ENCODE measurements at regions of chr1 and their contacts with region 1.

Region 1: DNA sequence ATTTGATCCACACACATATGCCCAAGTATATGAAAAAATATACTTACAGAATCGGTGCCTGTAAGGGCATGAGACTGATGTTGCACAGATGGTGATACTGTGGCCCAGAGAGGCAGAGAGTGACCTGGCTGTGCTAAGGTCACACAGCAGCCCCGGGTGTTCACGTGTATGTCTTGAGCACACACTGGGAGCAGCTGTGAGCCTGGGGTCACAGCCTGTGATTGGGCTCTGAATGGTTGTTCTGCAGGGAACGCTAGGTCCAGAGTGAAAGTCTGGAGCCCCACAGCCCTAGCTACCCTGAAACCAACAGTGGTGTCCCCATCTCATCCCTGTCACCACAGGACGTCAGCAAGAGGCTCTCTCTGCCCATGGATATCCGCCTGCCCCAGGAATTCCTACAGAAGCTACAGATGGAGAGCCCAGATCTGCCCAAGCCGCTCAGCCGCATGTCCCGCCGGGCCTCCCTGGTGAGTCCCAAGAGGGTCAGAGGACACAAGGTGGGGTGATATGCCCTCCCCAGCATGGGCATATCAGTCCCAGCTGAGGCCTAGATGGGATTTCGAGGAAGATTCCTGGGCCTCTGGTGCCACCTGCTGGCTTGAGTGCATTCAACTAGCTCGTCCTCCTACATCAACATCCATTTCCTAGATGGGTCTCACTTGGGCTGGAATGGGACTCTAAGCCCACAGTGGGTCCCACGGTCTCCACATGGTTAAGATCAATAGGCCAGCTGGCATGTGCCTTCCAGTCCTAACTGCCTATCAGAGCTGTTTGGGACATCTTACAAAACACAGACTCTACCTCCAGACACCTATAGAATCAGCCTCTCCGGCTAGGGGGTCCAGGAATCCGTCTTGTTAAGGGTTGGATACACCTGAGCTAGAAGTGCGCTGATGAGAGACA is 19.7 kb downstream of the CDK18 start:
- DNase-seq: peak; percentile 84
- ATAC-seq: peak; percentile 59
- H3K4me3 ChIP-seq: no peak overlapping the region
- H3K4me3 Mint-ChIP-seq: no peak overlapping the region
- H3K27ac ChIP-seq: no peak overlapping the region
- H3K27ac Mint-ChIP-seq: no peak overlapping the region
- H3K4me1 ChIP-seq: peaks cover 1 to 6% of the 10 kb centered on the region in 2 donors
- H3K4me1 Mint-ChIP-seq: peaks cover 2% of the 10 kb centered on the region
- H3K27me3 ChIP-seq: peaks cover 0 to 2% (median 0%) of the 10 kb centered on the region in 4 experiments
- H3K27me3 Mint-ChIP-seq: peaks cover 3% of the 10 kb centered on the region
- CTCF ChIP-seq: peak; percentile 78

Region 2: GRCh38 chr1:205321164-205321958 is 202.8 kb before region 1 on chr1 and contains the start of gene NUAK2:
- CTCF ChIA-PET with region 1: interaction called, 43 read pairs
- POLR2A ChIA-PET with region 1: no interaction called
- intact Hi-C with region 1: no loop called
- DNase-seq: peak; percentile 89
- ATAC-seq: peak; percentile 90
- H3K4me3 ChIP-seq: peak within 1 kb of the TSS; percentile 65 to 100 (median 98)
- H3K4me3 Mint-ChIP-seq: peak within 1 kb of the TSS; percentile 97
- H3K27ac ChIP-seq: peak within 1 kb of the TSS; percentile 65 to 98
- H3K27ac Mint-ChIP-seq: peak within 1 kb of the TSS; percentile 95
- H3K4me1 ChIP-seq: peaks cover 52 to 54% of the 10 kb centered on the region in 2 donors
- H3K4me1 Mint-ChIP-seq: peaks cover 62% of the 10 kb centered on the region
- H3K27me3 ChIP-seq: no peaks in the 10 kb centered on the region
- H3K27me3 Mint-ChIP-seq: peaks cover 2% of the 10 kb centered on the region
- CTCF ChIP-seq: peak; percentile 35
- total RNA-seq, gene NUAK2: 102 and 105 TPM in 2 replicates

Region 3: GRCh38 chr1:205344066-205344928 is 179.8 kb before region 1 on chr1:
- CTCF ChIA-PET with region 1: interaction called, 29 read pairs
- POLR2A ChIA-PET with region 1: no interaction called
- intact Hi-C with region 1: no loop called
- DNase-seq: peak; percentile 69
- ATAC-seq: peak; percentile 61
- H3K4me3 ChIP-seq: peak overlapping the region in 4 of 5 experiments; percentile 37 to 51 (median 50)
- H3K4me3 Mint-ChIP-seq: peak overlapping the region; percentile 84
- H3K27ac ChIP-seq: no peak overlapping the region
- H3K27ac Mint-ChIP-seq: peak overlapping the region; percentile 32
- H3K4me1 ChIP-seq: peaks cover 34 to 42% of the 10 kb centered on the region in 2 donors
- H3K4me1 Mint-ChIP-seq: peaks cover 48% of the 10 kb centered on the region
- H3K27me3 ChIP-seq: peaks cover 0 to 20% (median 10%) of the 10 kb centered on the region in 4 experiments
- H3K27me3 Mint-ChIP-seq: peaks cover 8% of the 10 kb centered on the region
- CTCF ChIP-seq: no peak

Region 4: DNA sequence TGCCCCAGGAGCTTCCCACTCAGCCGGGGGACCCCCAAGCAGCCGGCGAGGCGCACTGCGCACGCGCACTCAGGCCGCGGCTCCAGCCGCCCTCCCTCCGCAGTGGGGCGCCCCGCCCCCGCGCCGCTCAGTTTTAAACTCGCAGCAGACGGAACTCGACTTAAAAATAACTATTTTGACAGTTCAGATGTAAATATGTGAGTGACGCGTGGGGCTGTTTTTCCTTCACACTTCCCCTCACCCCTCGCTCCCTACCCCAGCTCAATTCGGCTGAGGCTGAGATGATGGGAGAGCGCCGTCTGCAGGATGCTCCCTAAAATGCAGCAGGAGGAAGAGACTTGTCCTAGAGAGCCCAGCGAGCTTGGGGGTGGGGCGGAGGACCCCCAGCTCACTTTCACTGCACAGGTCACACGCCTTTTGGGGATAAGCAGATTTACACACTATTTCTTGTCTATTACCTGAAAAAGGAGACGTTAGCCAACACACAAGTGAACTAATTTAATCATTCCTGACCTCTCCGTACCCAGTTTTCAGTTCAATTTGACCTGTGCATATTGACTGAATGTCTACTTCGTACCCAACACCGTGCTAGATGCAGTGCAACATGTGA is 93.3 kb before region 1 on chr1:
- CTCF ChIA-PET with region 1: interaction called, 13 read pairs
- POLR2A ChIA-PET with region 1: no interaction called
- intact Hi-C with region 1: no loop called
- DNase-seq: peak; percentile 88
- ATAC-seq: peak; percentile 91
- H3K4me3 ChIP-seq: peak overlapping the region; percentile 23 to 54 (median 46)
- H3K4me3 Mint-ChIP-seq: peak overlapping the region; percentile 80
- H3K27ac ChIP-seq: peak overlapping the region; percentile 4 to 43
- H3K27ac Mint-ChIP-seq: peak overlapping the region; percentile 70
- H3K4me1 ChIP-seq: peaks cover 25 to 33% of the 10 kb centered on the region in 2 donors
- H3K4me1 Mint-ChIP-seq: peaks cover 39% of the 10 kb centered on the region
- H3K27me3 ChIP-seq: no peaks in the 10 kb centered on the region
- H3K27me3 Mint-ChIP-seq: no peaks in the 10 kb centered on the region
- CTCF ChIP-seq: peak; percentile 70

Region 5: DNA sequence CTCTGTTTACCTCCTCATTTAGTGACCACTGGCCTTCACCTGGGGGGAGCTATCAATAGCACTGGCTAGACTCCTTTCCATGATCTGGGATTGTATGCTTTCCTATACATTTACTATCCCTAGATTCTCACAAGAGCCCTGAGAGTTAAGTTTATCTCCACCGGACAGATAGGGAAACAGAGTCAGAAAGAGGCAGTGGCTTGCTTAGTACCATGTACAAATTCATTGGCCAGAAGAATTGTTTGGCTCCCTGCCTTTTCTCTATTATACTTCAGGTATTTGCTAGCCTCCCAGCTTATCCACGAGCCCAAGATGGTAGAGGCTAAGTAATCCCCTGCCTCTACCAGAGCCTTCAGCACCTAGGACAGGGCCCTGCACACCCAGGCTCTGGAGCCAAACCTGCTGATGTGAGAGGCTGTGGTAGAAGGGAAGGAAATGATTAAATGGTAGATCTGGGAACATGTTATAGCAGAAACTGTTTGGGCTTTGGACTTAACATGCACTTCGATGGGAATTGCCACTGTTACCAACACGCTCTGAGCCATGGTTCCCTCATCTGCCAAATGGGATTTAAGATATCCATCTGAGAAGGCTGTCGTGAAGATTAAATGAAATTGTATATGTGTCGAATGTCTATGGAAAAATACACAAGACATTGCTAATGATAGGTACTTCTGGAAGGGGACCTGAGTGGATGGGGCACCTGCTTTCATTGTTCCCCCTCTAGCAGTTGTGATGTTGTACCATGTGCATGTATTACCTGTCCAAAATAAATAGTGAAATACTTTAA is 65.2 kb before region 1 on chr1:
- CTCF ChIA-PET with region 1: no interaction called
- POLR2A ChIA-PET with region 1: no interaction called
- intact Hi-C with region 1: no loop called
- DNase-seq: no peak
- ATAC-seq: peak; percentile 53
- H3K4me3 ChIP-seq: no peak overlapping the region
- H3K4me3 Mint-ChIP-seq: no peak overlapping the region
- H3K27ac ChIP-seq: no peak overlapping the region
- H3K27ac Mint-ChIP-seq: no peak overlapping the region
- H3K4me1 ChIP-seq: peaks cover 22 to 28% of the 10 kb centered on the region in 2 donors
- H3K4me1 Mint-ChIP-seq: peaks cover 18% of the 10 kb centered on the region
- H3K27me3 ChIP-seq: peaks cover 0 to 59% (median 38%) of the 10 kb centered on the region in 4 experiments
- H3K27me3 Mint-ChIP-seq: peaks cover 54% of the 10 kb centered on the region
- CTCF ChIP-seq: no peak

Region 6: GRCh38 chr1:205504311-205504984 is 19.7 kb before region 1 on chr1 and contains the start of gene CDK18:
- CTCF ChIA-PET with region 1: interaction called, 20 read pairs
- POLR2A ChIA-PET with region 1: no interaction called
- intact Hi-C with region 1: no loop called
- DNase-seq: peak; percentile 67
- ATAC-seq: peak; percentile 71
- H3K4me3 ChIP-seq: peak within 1 kb of the TSS; percentile 36 to 81 (median 62)
- H3K4me3 Mint-ChIP-seq: peak within 1 kb of the TSS; percentile 84
- H3K27ac ChIP-seq: no peak within 1 kb of the TSS
- H3K27ac Mint-ChIP-seq: peak within 1 kb of the TSS; percentile 63
- H3K4me1 ChIP-seq: peaks cover 8 to 12% of the 10 kb centered on the region in 2 donors
- H3K4me1 Mint-ChIP-seq: peaks cover 13% of the 10 kb centered on the region
- H3K27me3 ChIP-seq: peaks cover 0 to 10% (median 2%) of the 10 kb centered on the region in 4 experiments
- H3K27me3 Mint-ChIP-seq: peaks cover 3% of the 10 kb centered on the region
- CTCF ChIP-seq: no peak
- total RNA-seq, gene CDK18: 3.7 and 4.7 TPM in 2 replicates

Region 7: DNA sequence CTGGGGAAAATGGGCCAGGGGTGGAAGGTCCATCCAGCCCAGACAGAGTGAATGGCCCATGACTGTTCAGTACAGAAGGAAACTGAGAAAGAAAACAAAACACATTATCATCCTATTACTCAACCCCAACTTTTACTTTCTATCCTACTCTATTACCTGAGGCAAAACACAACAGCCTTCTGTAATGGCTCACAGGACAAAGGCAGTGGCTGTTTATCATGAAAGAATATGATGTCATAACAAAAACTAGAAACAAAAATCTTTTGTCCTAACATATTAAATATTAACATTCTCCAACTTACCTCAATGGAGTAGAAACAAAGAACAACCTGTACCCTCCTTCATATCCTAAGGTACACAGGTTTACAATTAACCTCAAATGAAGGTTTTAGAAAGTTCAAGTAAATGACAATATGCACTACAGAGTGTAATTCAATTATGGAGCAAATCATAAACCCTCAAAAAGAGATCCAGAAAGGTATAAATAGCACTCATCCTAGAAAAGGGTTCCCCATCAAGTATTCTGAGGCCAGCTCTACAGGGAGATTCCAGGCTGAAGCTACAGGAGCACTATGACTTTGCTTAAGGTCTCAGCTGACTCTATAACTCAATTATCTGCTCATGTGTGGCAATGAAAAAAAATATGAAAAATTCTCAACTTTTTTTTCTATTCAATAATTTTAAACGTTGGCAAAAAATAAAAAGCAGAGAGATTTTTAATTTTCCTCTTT is 92.6 kb after region 1 on chr1:
- CTCF ChIA-PET with region 1: no interaction called
- POLR2A ChIA-PET with region 1: no interaction called
- intact Hi-C with region 1: no loop called
- DNase-seq: no peak
- ATAC-seq: no peak
- H3K4me3 ChIP-seq: no peak overlapping the region
- H3K4me3 Mint-ChIP-seq: no peak overlapping the region
- H3K27ac ChIP-seq: no peak overlapping the region
- H3K27ac Mint-ChIP-seq: no peak overlapping the region
- H3K4me1 ChIP-seq: peaks cover 1 to 4% of the 10 kb centered on the region in 2 donors
- H3K4me1 Mint-ChIP-seq: peaks cover 18% of the 10 kb centered on the region
- H3K27me3 ChIP-seq: no peaks in the 10 kb centered on the region
- H3K27me3 Mint-ChIP-seq: no peaks in the 10 kb centered on the region
- CTCF ChIP-seq: no peak

Region 8: GRCh38 chr1:205631727-205632373 is 107.7 kb after region 1 on chr1 and contains the start of gene ELK4:
- CTCF ChIA-PET with region 1: interaction called, 19 read pairs
- POLR2A ChIA-PET with region 1: interaction called, 3 read pairs
- intact Hi-C with region 1: no loop called
- DNase-seq: peak; percentile 99
- ATAC-seq: peak; percentile 81
- H3K4me3 ChIP-seq: peak within 1 kb of the TSS; percentile 57 to 94 (median 72)
- H3K4me3 Mint-ChIP-seq: peak within 1 kb of the TSS; percentile 94
- H3K27ac ChIP-seq: peak within 1 kb of the TSS; percentile 85 to 93
- H3K27ac Mint-ChIP-seq: peak within 1 kb of the TSS; percentile 96
- H3K4me1 ChIP-seq: peaks cover 33 to 41% of the 10 kb centered on the region in 2 donors
- H3K4me1 Mint-ChIP-seq: peaks cover 44% of the 10 kb centered on the region
- H3K27me3 ChIP-seq: no peaks in the 10 kb centered on the region
- H3K27me3 Mint-ChIP-seq: no peaks in the 10 kb centered on the region
- CTCF ChIP-seq: peak; percentile 80
- total RNA-seq, gene ELK4: 143 and 151 TPM in 2 replicates

Measured in B cell (primary cell).